Dendritic cell treated with granulocyte-macrophage colony-stimulating factor and Interleukin-4, amounts not matched to agents 40 ng/mL and 50 ng/mL, for 4 days (primary cell): ENCODE measurements at regions of chr20 and their contacts with region 1.

Region 1: DNA sequence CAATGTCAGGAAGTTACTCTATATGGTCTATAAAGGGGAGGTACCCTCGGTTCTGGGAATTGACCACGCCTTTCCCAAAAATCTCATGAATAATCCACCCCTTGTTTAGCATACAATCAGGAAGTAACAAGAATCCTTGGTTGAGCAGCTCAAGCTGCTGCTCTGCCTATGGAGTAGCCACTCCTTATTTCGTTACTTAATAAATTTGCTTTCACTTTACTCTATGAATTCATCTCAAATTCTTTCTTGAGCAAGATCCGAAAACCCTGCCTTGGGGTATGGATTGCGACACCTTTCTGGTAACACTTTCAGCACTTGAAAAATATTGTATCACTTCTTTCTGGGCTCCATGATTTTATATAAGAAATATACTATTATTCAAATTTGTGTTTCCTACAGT is 243.1 kb downstream of the BMP2 start:
- H3K4me3 Mint-ChIP-seq: no peak overlapping the region
- H3K27ac Mint-ChIP-seq: no peak overlapping the region
- H3K4me1 Mint-ChIP-seq: no peaks in the 10 kb centered on the region
- H3K27me3 Mint-ChIP-seq: no peaks in the 10 kb centered on the region

Region 2: DNA sequence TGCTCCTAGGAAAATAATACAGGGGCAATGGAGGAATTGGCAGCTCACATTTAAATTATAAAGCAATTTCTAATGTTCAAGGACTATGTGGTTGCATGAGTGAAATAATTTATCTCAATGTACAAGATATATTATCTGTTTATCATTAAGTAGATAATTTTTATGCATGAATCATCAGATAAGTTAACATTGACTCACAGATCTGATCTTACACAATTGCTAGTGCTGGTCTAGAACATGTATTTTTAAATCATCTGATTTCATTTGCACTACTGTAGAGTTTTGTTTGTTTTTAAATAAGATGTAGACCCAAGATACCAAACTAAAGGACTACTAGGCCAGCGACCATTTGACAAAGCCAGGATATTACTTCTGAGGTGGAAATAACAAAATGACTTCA is 43.9 kb before region 1 on chr20:
- intact Hi-C with region 1: no loop called
- H3K4me3 Mint-ChIP-seq: no peak overlapping the region
- H3K27ac Mint-ChIP-seq: no peak overlapping the region
- H3K4me1 Mint-ChIP-seq: no peaks in the 10 kb centered on the region
- H3K27me3 Mint-ChIP-seq: no peaks in the 10 kb centered on the region

Region 3: GRCh38 chr20:7057611-7058010 is 47.0 kb after region 1 on chr20:
- intact Hi-C with region 1: no loop called
- H3K4me3 Mint-ChIP-seq: no peak overlapping the region
- H3K27ac Mint-ChIP-seq: no peak overlapping the region
- H3K4me1 Mint-ChIP-seq: no peaks in the 10 kb centered on the region
- H3K27me3 Mint-ChIP-seq: no peaks in the 10 kb centered on the region

Region 4: GRCh38 chr20:7078813-7079212 is 68.2 kb after region 1 on chr20:
- intact Hi-C with region 1: loop called (anchors 10 kb)
- H3K4me3 Mint-ChIP-seq: no peak overlapping the region
- H3K27ac Mint-ChIP-seq: no peak overlapping the region
- H3K4me1 Mint-ChIP-seq: no peaks in the 10 kb centered on the region
- H3K27me3 Mint-ChIP-seq: no peaks in the 10 kb centered on the region